Right ventricle myocardium inferior (tissue), 1 donor: ENCODE measurements at regions of chr9 and their contacts with region 1.

Region 1: DNA sequence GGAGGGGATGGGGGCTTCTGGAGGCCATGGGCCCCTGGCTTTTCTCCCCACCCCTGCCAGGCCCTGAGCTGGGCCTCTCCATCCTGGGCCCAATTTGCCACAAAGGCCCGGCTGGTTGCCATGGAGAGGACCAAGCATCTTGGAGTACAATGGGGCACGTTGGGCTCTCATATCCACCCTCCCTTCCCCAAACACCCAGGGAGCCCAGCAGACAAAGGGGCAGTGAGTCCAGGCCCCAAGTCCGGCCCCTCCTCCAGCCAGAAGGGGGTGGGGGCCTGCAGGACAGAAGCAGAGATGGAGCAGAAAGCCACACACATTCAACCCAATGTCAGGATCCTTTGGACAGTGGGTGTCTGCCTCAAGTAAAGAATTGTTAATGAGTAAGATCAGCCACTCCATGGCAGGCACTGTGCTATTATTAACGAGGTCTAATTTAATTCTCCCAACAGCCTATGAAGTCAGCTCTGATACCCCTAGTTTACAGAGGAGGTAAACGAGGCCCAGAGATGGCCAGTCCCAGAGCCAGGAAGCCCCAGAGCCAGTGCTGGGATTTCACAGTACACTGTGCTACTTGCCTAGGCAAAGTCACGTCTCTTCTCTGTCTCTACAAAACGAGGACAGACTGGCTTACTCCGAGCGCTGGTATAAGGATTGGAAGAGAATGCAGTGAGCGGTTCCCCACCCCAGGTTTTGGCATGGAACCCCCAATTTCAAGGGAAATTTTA is 2.3 kb downstream of the CRB2 start:
- DNase-seq: no peak
- ATAC-seq: no peak

Region 2: GRCh38 chr9:123383512-123384170 is 25.3 kb after region 1 on chr9:
- intact Hi-C with region 1: loop called (anchors 1 kb)
- DNase-seq: peak; percentile 16
- ATAC-seq: no peak